Mucosa of descending colon (tissue), 3 donors: ENCODE measurements at regions of chr3 and their contacts with region 1.

Region 1: GRCh38 chr3:48273594-48274211 is 32.8 kb downstream of the ZNF589 start:
- DNase-seq: peak in 2 of 3 donors; percentile 36 to 82
- ATAC-seq: peak; percentile 61
- H3K4me3 ChIP-seq: no peak overlapping the region
- H3K4me1 ChIP-seq: peaks cover 10% of the 10 kb centered on the region
- CTCF ChIP-seq: peak; percentile 52

Region 2: GRCh38 chr3:48394391-48394790 is 120.7 kb after region 1 on chr3:
- intact Hi-C with region 1: no loop called
- DNase-seq: no peak
- ATAC-seq: no peak
- H3K4me3 ChIP-seq: no peak overlapping the region
- H3K4me1 ChIP-seq: no peaks in the 10 kb centered on the region
- CTCF ChIP-seq: no peak

Region 3: DNA sequence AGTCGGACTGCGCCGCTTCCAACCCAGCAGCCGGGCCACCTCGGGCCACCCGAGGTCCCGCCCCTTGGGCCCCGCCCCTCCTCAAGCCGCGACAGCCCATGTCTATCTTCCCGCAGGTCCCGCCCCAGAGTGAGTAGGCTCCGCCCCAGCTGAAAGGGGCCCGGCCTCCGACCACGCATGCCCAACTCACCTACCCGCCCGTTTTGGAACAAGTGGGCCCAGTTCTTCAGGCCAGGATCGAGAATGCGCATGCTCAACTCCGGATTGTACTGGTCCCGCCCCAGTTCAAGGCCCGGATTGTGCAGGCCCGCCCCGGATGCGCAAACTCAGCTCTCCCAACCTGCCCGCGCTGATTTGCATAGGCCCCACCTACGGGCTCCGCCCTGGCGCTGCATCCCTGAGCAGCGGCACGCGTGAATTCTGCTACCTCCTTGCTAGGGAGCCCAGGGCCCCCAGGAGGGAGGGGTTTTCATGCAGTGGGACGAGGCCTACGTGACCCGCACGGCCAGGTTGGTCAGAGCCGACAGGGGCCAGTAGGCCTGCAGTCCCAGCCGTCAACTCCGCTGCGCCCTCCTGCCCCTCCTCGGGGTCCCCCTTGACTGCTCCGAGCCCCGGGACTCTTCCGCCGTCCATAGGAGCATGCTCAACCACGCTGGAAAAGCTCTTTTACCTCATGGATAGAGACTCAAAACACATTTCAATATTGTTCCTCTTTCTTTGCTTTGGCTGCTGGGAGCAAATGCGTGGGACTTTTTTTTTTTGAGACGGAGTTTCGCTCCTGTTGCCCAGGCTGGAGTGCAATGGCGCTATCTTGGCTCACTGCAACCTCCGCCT is 283.3 kb after region 1 on chr3 and contains the start of gene PFKFB4:
- intact Hi-C with region 1: loop called in 1 of 2 experiments (anchors 10 kb)
- DNase-seq: peak; percentile 99 to 100 (median 100)
- ATAC-seq: peak; percentile 90
- H3K4me3 ChIP-seq: peak within 1 kb of the TSS; percentile 11
- H3K4me1 ChIP-seq: peaks cover 30% of the 10 kb centered on the region
- CTCF ChIP-seq: no peak
- total RNA-seq, gene PFKFB4: 4.4 to 14.2 (median 10.8) TPM